Panc1 (cell line): ENCODE measurements at regions of chr6 and their contacts with region 1.

Region 1: DNA sequence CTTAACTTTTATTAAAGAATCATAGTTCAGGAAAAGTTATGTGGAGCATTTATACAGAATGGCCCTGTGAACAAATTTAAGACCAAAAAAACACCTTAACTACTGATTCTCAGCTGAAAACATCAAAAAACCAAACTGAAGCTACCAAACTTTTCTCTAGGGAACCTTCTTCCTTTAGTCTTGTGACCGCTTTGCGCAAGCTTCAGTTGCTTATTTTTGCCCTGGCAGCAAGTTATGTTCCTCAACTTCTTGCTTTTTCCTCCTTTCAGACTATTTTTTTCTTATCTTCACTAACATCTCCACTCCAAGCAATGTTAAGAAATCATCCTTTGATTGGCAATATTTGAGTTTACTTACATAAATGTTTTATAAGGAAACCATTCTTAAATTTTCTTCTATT is 100.1 kb downstream of the MYB start:
- DNase-seq: no peak
- ATAC-seq: no peak
- H3K4me3 ChIP-seq: no peak overlapping the region
- H3K27ac ChIP-seq: no peak overlapping the region
- H3K4me1 ChIP-seq: no peaks in the 10 kb centered on the region
- H3K27me3 ChIP-seq: no peaks in the 10 kb centered on the region
- CTCF ChIP-seq: no peak

Region 2: GRCh38 chr6:135170849-135171248 is 110.4 kb before region 1 on chr6:
- CTCF ChIA-PET with region 1: no interaction called
- POLR2A ChIA-PET with region 1: no interaction called
- in situ Hi-C with region 1: no loop called
- intact Hi-C with region 1: no loop called
- DNase-seq: no peak
- ATAC-seq: no peak
- H3K4me3 ChIP-seq: no peak overlapping the region
- H3K27ac ChIP-seq: no peak overlapping the region
- H3K4me1 ChIP-seq: no peaks in the 10 kb centered on the region
- H3K27me3 ChIP-seq: peaks cover 2% of the 10 kb centered on the region; the same call in 1 of the 2 replicates
- CTCF ChIP-seq: no peak

Region 3: GRCh38 chr6:135236732-135237131 is 44.5 kb before region 1 on chr6:
- CTCF ChIA-PET with region 1: no interaction called
- POLR2A ChIA-PET with region 1: interaction called, 10 read pairs
- in situ Hi-C with region 1: no loop called
- intact Hi-C with region 1: no loop called
- DNase-seq: no peak
- ATAC-seq: no peak
- H3K4me3 ChIP-seq: no peak overlapping the region
- H3K27ac ChIP-seq: no peak overlapping the region
- H3K4me1 ChIP-seq: no peaks in the 10 kb centered on the region
- H3K27me3 ChIP-seq: no peaks in the 10 kb centered on the region; the same call in 1 of the 2 replicates
- CTCF ChIP-seq: no peak